Panc1 (cell line): ENCODE measurements at regions of chr1 and their contacts with region 1.

Region 1: GRCh38 chr1:46303038-46303871 is at the starts of genes LRRC41 and UQCRH:
- DNase-seq: peak; percentile 93
- ATAC-seq: peak; percentile 90
- H3K4me3 ChIP-seq: peak within 1 kb of the TSS; percentile 88 to 100
- H3K27ac ChIP-seq: peak within 1 kb of the TSS; percentile 97
- H3K4me1 ChIP-seq: peaks cover 24% of the 10 kb centered on the region; the same call in 1 of the 2 replicates
- H3K27me3 ChIP-seq: no peaks in the 10 kb centered on the region
- CTCF ChIP-seq: no peak
- total RNA-seq, gene LRRC41: 55.3 TPM
- total RNA-seq, gene UQCRH: 498 TPM

Region 2: DNA sequence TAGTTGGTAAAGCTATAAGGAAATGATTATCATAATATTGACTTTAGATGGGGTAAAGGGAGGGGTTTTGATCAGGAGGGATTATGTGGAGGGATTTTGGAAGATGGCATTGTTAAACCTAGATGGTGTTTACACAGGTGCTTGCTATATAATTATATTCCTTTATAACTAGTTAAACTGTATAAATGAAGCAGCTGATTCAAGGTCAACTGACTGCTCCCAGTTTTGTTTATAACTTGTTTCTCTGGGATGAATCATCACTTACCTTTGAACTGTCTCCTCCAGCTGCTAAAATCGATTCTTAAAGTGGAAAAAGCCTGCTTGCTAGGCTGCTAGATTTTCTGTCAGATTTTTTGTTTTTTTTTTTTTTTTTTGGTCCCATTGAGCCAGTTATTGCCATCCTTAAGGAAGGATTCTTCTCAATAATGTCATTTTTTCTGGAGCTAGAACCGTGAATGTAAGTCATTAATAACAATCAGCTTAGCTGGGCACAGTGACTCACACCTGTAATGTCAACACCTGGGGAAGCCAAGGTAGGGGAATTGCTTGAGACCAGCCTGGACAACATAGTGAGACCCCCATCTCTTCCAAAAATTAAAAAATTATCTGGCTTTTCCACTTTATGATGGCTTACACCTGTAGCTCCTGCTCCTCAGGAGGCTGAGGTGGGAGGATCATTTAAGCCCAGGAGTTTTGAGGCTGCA is 324.0 kb before region 1 on chr1:
- CTCF ChIA-PET with region 1: no interaction called
- POLR2A ChIA-PET with region 1: no interaction called
- in situ Hi-C with region 1: no loop called
- intact Hi-C with region 1: no loop called
- DNase-seq: peak; percentile 64
- ATAC-seq: peak; percentile 73
- H3K4me3 ChIP-seq: no peak overlapping the region
- H3K27ac ChIP-seq: peak overlapping the region; percentile 72
- H3K4me1 ChIP-seq: peaks cover 16% of the 10 kb centered on the region
- H3K27me3 ChIP-seq: no peaks in the 10 kb centered on the region
- CTCF ChIP-seq: no peak

Region 3: DNA sequence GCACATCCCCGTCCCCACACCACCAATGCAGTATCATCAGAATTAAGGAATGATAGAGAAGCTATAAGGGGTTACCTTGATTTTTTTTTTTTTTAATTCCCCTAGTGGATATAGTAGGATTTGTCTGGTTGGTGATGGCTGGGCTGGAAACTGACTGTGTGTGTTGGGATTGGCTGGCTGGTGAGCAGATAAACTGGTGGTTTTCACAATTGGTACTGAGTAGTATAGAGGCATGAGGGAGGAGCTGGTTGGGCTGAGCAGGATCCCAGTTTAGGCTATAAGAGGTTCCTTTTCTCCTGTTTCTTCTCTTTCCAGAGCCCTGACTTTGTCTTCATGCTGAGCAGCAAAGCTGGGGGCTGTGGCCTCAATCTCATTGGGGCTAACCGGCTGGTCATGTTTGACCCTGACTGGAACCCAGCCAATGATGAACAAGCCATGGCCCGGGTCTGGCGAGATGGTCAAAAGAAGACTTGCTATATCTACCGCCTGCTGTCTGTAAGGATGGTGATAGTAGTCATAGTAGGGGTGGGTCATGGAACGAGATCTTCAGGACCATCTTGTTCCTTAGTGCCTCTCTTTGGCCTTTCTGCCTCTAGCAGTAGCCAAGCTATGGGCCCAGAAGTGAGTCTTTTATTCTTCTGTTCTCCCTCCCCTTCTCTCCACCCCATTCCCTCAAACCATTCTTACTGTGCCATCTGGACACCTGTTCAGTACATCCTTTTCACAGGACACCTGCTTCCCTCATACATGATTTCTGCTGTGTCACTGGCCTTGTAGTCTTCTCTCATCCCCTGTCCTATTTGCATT is 28.8 kb before region 1 on chr1:
- CTCF ChIA-PET with region 1: interaction called, 15 read pairs
- POLR2A ChIA-PET with region 1: no interaction called
- in situ Hi-C with region 1: no loop called
- intact Hi-C with region 1: no loop called
- DNase-seq: no peak
- ATAC-seq: no peak
- H3K4me3 ChIP-seq: no peak overlapping the region
- H3K27ac ChIP-seq: no peak overlapping the region
- H3K4me1 ChIP-seq: no peaks in the 10 kb centered on the region
- H3K27me3 ChIP-seq: no peaks in the 10 kb centered on the region
- CTCF ChIP-seq: no peak

Region 4: DNA sequence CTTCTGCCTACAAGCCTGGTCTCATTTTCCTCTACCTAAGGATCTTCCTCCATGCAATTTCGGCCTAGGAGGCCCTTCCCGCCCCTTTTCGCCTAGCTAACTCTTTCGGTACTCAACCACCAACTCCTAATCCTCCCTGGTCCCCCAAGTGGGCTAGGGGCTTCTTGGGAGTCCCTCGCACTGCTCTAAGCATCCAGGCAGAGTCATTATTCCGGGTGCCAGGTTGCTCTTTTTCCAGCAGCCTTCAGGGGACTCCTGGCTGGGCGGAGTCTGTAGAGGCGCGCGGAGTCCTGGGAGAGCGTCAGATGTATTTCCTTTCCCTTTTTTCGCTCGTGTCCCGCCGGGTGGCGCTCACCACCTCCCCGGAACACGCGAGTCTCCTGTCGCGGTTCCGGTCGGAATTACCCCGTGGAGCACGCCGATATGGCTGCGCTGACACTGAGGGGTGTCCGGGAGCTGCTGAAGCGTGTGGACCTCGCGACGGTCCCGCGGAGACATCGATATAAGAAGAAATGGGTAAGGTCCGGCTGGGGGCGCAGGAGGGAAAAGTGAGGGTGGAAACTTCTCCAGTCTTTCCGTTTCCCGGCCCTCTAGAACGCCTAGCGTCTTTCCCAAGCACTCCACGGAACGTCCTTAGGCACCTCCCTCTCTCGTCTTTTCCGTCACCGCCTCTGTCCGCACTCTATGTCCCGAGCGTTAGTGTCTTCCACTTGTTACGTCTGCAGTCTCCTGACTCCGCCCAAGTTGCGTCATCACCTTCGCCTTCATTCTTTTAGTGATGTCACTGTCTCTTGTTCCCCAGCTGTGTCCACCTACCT is 37.4 kb after region 1 on chr1 and contains the start of gene NSUN4:
- CTCF ChIA-PET with region 1: interaction called, 6 read pairs
- POLR2A ChIA-PET with region 1: interaction called, 10 read pairs
- in situ Hi-C with region 1: no loop called
- intact Hi-C with region 1: no loop called
- DNase-seq: peak; percentile 85
- ATAC-seq: peak; percentile 95
- H3K4me3 ChIP-seq: peak within 1 kb of the TSS; percentile 76 to 97
- H3K27ac ChIP-seq: peak within 1 kb of the TSS; percentile 95
- H3K4me1 ChIP-seq: peaks cover 5% of the 10 kb centered on the region; the same call in 1 of the 2 replicates
- H3K27me3 ChIP-seq: no peaks in the 10 kb centered on the region
- CTCF ChIP-seq: peak; percentile 97
- total RNA-seq, gene NSUN4: 23.6 TPM

Region 5: DNA sequence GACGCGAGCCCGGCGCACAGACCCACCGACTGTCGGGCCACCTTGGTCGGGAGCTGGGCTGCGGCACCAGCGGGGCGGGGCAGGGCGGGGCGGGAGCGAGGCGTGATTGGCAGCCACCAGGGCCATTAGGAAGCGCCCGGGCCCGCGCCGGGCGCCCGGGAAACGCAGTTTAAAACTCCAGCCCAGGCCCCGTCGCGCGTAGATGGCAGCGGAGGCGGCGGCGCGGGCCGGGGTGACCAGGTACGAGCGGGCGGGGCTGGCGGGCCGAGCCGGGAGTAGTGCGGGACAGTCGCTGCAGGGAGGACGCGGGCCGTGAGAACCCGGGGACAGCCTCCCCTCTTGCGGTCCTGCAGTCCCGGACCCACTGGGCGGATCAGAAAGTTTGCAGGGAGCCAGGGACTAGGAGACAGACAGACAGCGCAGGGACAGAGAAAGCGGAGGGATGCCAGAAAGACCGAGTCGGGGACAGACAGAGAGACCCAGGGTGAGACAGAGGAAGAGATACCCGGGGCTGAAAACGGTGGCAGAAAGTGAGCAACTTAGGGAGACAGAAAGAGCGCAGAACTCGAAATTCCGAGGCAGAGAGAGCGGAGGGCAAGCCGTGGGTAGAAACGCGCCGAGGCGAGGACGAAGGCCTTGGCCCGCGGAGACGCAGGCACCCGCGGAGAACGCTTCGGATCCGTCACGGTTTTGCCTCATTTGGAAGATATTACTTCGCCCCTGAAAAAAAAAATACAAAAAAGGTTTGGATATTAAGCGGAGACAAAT is 186.6 kb after region 1 on chr1 and contains the start of gene DMBX1:
- CTCF ChIA-PET with region 1: no interaction called
- POLR2A ChIA-PET with region 1: no interaction called
- in situ Hi-C with region 1: no loop called
- intact Hi-C with region 1: no loop called
- DNase-seq: no peak
- ATAC-seq: peak; percentile 91
- H3K4me3 ChIP-seq: peak within 1 kb of the TSS; percentile 46 to 58
- H3K27ac ChIP-seq: no peak within 1 kb of the TSS
- H3K4me1 ChIP-seq: peaks cover 5% of the 10 kb centered on the region; the same call in 1 of the 2 replicates
- H3K27me3 ChIP-seq: no peaks in the 10 kb centered on the region; the same call in 1 of the 2 replicates
- CTCF ChIP-seq: no peak
- total RNA-seq, gene DMBX1: 0.05 TPM